ENCODE measurements at regions of chr12 and their contacts with region 1.

Region 1: DNA sequence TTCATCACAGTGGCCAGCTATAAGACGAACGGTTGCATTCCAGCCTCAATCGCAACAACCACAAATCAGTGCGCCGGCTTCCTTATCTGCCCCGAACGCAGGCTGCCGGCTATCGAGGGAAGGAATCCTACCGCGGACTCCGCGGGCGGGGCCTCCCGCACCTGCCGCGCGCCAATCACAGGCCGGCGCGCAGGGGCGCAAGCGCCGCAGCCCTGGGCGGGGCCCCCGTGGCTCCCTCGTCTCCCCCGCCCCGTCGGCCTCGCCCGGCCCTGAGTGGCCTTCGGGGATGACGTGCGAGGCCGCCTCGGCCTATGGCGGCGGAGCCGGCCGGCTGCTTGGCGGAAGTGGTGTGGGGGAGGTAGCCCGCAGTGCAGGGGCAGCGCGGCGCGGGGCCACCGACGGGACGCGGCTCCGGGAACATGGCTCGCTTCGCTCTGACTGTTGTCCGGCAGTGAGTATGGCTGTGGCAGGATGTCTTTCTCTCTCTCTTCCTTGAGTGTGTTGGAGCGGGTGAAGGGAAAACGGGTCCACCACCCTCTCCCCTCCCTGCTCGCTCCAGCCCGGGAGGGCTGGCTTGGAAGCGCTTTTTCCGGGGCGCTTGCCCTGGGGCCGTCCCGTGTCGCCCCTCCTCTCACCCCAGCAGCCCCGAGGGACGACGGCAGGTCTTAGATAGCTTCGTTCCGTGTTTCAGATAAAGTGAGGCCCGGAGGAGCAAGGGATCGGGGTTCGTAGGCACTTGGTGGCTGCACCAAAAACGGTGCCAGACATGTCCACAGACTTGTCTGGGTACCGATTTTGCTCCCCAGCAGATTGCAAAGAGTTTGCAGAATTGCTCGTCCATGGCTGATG is at the start of gene TIGAR:
- ATAC-seq: peak; percentile 94 to 99 (median 97)
- H3K4me3 ChIP-seq: peak within 1 kb of the TSS; percentile 52 to 85 (median 68)
- H3K27ac ChIP-seq: peak within 1 kb of the TSS; percentile 61 to 81
- H3K4me1 ChIP-seq: peaks cover 5 to 10% of the 10 kb centered on the region in 2 donors
- total RNA-seq, gene TIGAR: 5.1 to 39.4 (median 12.0) TPM

Region 2: DNA sequence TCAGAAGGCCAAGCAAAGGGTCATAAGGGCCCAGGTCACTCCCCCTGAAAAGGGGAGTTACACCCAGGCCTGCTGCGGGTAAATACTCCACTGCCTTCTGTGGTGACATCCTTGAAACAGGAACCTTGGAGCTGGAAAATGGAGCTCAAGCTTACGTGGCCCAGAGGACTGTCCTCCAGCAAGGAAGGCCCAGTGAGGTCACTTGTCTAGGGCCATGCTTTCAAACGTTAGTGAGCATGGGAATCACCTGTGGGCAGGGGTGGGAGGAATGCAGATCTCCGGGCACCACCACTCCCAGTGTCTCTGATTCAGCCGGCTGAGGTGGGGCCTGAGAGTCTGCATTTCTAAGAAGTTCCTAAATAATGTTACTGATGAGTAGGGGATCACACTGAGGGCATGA is 188.0 kb before region 1 on chr12:
- in situ Hi-C with region 1: no loop called
- ATAC-seq: no peak
- H3K4me3 ChIP-seq: no peak overlapping the region
- H3K27ac ChIP-seq: no peak overlapping the region
- H3K4me1 ChIP-seq: peaks cover 24 to 37% of the 10 kb centered on the region in 2 donors

Region 3: GRCh38 chr12:4538207-4539160 is 217.4 kb after region 1 on chr12 and contains the start of gene RAD51AP1:
- in situ Hi-C with region 1: loop called in 2 of 9 experiments (anchors 25 kb)
- ATAC-seq: peak; percentile 99 to 100 (median 100)
- H3K4me3 ChIP-seq: peak within 1 kb of the TSS; percentile 69 to 89 (median 87)
- H3K27ac ChIP-seq: peak within 1 kb of the TSS; percentile 97 to 99
- H3K4me1 ChIP-seq: peaks cover 0 to 6% of the 10 kb centered on the region in 2 donors
- total RNA-seq, gene RAD51AP1: 0.25 to 32.1 (median 5.5) TPM

Measured in motor neuron (in vitro differentiated cells).